ENCODE measurements at regions of chr2 and their contacts with region 1.

Region 1: GRCh38 chr2:54455563-54456361 is at the start of gene SPTBN1:
- DNase-seq: peak; percentile 94
- H3K4me3 ChIP-seq: peak within 1 kb of the TSS; percentile 62
- H3K27ac ChIP-seq: peak within 1 kb of the TSS; percentile 75
- H3K4me1 ChIP-seq: peaks cover 24% of the 10 kb centered on the region
- H3K27me3 ChIP-seq: no peaks in the 10 kb centered on the region
- CTCF ChIP-seq: no peak
- total RNA-seq, gene SPTBN1: 145 and 146 TPM in 2 replicates

Region 2: DNA sequence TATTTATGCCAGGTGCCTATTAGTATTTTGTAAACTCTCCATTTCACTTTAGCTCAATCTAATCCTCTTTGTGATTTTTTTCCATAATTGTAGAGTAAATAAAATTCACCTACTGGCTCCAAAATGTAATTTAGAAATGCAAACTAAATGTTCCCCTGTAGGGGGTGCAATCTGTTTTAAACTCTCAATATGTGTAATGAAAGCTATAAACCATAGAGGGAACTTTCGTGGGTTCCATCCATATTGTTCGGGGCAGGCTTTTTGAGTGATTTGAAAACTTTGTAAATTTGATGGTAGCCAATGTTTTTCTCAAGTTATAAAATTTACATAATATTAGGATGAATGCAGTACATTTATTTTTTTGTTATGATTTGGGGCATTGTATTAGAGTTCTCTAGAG is 249.2 kb before region 1 on chr2:
- CTCF ChIA-PET with region 1: no interaction called
- POLR2A ChIA-PET with region 1: no interaction called
- intact Hi-C with region 1: loop called (anchors 5 kb)
- DNase-seq: peak; percentile 76
- H3K4me3 ChIP-seq: no peak overlapping the region
- H3K27ac ChIP-seq: no peak overlapping the region
- H3K4me1 ChIP-seq: peaks cover 32% of the 10 kb centered on the region
- H3K27me3 ChIP-seq: no peaks in the 10 kb centered on the region
- CTCF ChIP-seq: peak; percentile 70